Astrocyte of the cerebellum (primary cell): ENCODE measurements at regions of chr14 and their contacts with region 1.

Region 1: DNA sequence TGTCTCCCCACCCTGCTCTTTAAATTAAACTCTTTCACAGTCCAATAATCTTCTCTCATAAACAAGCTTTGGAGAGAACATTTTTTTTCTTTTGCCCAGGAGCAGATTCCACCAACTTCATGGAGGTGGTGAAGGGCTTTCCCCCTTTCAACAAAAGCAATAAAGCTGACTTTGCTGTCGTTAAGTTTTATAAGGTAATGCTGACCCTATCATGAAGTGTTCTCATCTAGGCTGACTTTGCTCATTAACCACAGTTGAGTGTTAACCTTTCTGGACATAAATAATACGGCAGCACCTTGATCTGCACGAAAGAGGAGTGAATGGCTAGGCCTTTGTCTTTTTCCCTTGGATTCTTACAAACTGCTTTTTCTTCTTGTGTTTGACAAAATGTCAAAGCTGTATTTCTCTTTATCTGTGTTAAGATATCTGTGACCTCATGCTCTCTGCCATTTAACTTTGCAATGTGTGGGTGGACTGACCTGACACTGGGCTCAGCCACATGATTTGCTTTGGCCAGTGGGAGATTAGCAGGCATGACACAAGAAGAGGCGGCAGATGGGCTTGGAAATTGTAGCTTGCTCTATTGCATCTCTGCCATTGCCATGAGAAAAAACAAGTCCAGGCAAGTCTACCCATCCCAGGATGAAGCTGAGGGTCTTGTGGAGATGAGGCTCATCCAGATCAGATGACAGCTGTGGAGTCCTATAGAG is 470.9 kb upstream of the CCDC196 start:
- DNase-seq: no peak
- H3K4me3 ChIP-seq: no peak overlapping the region
- CTCF ChIP-seq: no peak

Region 2: GRCh38 chr14:66045572-66046021 is 30.4 kb after region 1 on chr14:
- in situ Hi-C with region 1: loop called (anchors 5 kb)
- DNase-seq: no peak
- H3K4me3 ChIP-seq: no peak overlapping the region
- CTCF ChIP-seq: no peak